ENCODE measurements at regions of chr4 and their contacts with region 1.

Region 1: DNA sequence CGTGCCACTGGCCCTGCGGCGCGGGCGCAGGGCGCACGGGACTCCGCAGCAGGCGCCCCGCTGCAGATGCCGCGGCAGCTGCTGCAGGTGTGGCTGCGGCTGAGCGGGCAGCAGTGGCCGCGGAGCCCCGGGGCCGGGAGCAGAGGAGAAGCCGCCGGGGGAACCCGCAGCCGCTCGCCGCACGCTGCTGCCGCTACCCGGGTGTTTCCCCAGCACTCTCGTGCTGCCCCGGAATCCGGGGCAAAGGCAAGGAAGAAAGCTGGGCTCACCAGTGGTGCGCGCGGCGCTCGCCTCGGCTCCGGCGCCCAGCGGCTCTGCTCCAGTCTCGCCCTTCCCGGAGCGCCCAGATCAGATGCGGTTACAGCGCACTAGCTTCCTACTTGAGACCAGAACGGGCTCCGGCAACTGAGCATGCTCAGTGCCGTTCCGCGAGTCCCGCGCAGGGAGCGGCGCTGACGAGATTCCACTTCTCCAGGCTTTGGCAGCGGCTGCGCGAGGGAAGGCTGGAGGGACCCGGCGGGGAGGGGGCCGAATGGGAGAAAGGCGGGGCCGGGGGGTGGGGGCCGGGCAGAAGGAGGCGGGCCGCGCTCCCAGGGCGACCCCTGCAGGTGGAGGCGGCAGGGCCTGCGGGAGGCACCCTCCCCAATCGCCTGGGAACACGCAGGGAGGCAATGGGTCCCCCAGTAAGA is at the start of gene APBB2:
- DNase-seq: peak; percentile 97
- total RNA-seq, gene APBB2: 55.2 to 70.1 TPM

Region 2: DNA sequence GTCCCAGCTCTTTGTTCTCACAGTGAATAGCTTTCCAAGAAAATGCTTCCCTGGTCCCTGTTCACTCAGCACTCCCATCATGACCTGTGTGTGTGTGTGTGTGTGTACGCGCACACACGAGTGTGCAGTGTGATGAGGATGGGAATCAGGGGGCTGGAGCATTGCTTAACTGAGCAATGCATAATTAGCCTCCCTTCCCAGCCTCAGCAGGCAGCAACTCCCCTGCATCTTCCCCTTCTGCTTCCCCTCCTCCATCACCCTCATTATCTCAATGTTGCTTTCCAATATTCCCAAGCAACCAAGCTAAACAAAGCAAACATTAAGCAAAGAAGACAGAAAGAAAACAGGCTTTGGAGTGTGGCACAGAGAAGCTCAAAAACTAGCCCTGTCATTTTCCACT is 721.6 kb before region 1 on chr4:
- intact Hi-C with region 1: no loop called
- DNase-seq: no peak

Region 3: GRCh38 chr4:40630335-40631021 is 583.8 kb before region 1 on chr4:
- intact Hi-C with region 1: loop called in 1 of 2 experiments (anchors 5 kb)
- DNase-seq: peak; percentile 82

Region 4: GRCh38 chr4:40924793-40925117 is 289.5 kb before region 1 on chr4:
- intact Hi-C with region 1: loop called in 1 of 2 experiments (anchors 5 kb)
- DNase-seq: no peak

Region 5: GRCh38 chr4:40976343-40976742 is 237.9 kb before region 1 on chr4:
- intact Hi-C with region 1: loop called (anchors 5 to 10 kb)
- DNase-seq: no peak

Region 6: GRCh38 chr4:41143311-41144039 is 70.8 kb before region 1 on chr4:
- intact Hi-C with region 1: loop called (anchors 5 to 10 kb)
- DNase-seq: no peak

Region 7: GRCh38 chr4:41882625-41883347 is 668.5 kb after region 1 on chr4:
- intact Hi-C with region 1: no loop called
- DNase-seq: peak; percentile 81

Measured in posterior vena cava (tissue), 2 donors.